Mammary epithelial cell (primary cell): ENCODE measurements at regions of chr3 and their contacts with region 1.

Region 1: GRCh38 chr3:105014631-105015030 is 352.1 kb upstream of the ALCAM start:
- DNase-seq: no peak
- H3K4me3 ChIP-seq: no peak overlapping the region
- H3K27ac ChIP-seq: no peak overlapping the region
- H3K4me1 ChIP-seq: no peaks in the 10 kb centered on the region
- H3K27me3 ChIP-seq: no peaks in the 10 kb centered on the region
- CTCF ChIP-seq: no peak

Region 2: GRCh38 chr3:104920512-104920911 is 94.1 kb before region 1 on chr3:
- CTCF ChIA-PET with region 1: no interaction called
- dilution Hi-C with region 1: no loop called
- in situ Hi-C with region 1: no loop called
- intact Hi-C with region 1: no loop called
- DNase-seq: no peak
- H3K4me3 ChIP-seq: no peak overlapping the region
- H3K27ac ChIP-seq: no peak overlapping the region
- H3K4me1 ChIP-seq: no peaks in the 10 kb centered on the region
- H3K27me3 ChIP-seq: no peaks in the 10 kb centered on the region
- CTCF ChIP-seq: no peak

Region 3: DNA sequence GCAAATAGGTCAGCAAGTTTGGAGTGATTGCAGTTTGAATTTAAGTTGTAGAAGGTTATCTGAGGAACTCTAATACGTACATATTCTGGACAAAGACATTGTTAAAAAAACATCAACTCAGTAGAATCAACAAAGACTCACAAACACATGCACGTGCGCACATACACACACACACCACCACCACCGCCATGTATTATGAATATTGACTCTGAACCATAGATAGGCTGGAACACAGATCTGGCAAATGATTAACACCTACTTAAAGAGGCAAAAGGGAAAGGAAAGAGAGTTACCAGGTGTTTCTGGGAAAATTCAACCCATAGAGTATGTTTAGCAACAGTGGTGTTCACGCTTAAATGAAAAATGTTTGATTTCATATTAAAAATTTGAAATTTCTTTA is 17.9 kb after region 1 on chr3:
- CTCF ChIA-PET with region 1: no interaction called
- dilution Hi-C with region 1: no loop called
- in situ Hi-C with region 1: no loop called
- intact Hi-C with region 1: loop called (anchors 1 kb)
- DNase-seq: no peak
- H3K4me3 ChIP-seq: no peak overlapping the region
- H3K27ac ChIP-seq: no peak overlapping the region
- H3K4me1 ChIP-seq: no peaks in the 10 kb centered on the region
- H3K27me3 ChIP-seq: no peaks in the 10 kb centered on the region
- CTCF ChIP-seq: no peak

Region 4: DNA sequence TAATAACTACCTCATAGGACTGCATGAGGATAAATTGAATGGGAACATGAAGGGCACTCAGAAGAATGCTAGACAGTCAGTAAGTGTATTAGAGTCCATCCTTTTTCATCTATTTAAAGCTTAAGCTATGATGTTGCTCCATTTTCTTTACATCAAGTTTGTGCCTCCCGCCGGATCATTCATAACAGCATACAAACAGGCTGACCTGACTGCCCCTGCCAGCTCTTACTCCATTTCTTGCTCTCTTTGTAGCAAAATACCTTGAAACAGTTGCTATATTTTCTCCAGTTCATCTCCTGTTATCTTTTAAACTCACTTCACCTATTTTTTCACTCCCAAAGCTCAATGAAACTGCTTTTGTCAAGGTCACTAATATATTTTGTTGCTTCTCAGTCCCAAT is 36.5 kb after region 1 on chr3:
- CTCF ChIA-PET with region 1: no interaction called
- dilution Hi-C with region 1: loop called (anchors 5 kb)
- in situ Hi-C with region 1: no loop called
- intact Hi-C with region 1: no loop called
- DNase-seq: no peak
- H3K4me3 ChIP-seq: no peak overlapping the region
- H3K27ac ChIP-seq: no peak overlapping the region
- H3K4me1 ChIP-seq: no peaks in the 10 kb centered on the region
- H3K27me3 ChIP-seq: no peaks in the 10 kb centered on the region
- CTCF ChIP-seq: no peak